Calu3 (cell line): ENCODE measurements at regions of chr17 and their contacts with region 1.

Region 1: GRCh38 chr17:81153340-81153803 is 11.9 kb upstream of the PVALEF start:
- DNase-seq: no peak
- H3K4me3 Mint-ChIP-seq: no peak overlapping the region
- H3K27ac Mint-ChIP-seq: no peak overlapping the region
- H3K4me1 Mint-ChIP-seq: no peaks in the 10 kb centered on the region
- H3K27me3 Mint-ChIP-seq: peaks cover 71% of the 10 kb centered on the region
- CTCF ChIP-seq: no peak

Region 2: GRCh38 chr17:81167638-81168037 is 14.3 kb after region 1 on chr17:
- CTCF ChIA-PET with region 1: no interaction called
- intact Hi-C with region 1: no loop called
- DNase-seq: no peak
- H3K4me3 Mint-ChIP-seq: no peak overlapping the region
- H3K27ac Mint-ChIP-seq: no peak overlapping the region
- H3K4me1 Mint-ChIP-seq: no peaks in the 10 kb centered on the region
- H3K27me3 Mint-ChIP-seq: peaks cover 33% of the 10 kb centered on the region
- CTCF ChIP-seq: no peak

Region 3: DNA sequence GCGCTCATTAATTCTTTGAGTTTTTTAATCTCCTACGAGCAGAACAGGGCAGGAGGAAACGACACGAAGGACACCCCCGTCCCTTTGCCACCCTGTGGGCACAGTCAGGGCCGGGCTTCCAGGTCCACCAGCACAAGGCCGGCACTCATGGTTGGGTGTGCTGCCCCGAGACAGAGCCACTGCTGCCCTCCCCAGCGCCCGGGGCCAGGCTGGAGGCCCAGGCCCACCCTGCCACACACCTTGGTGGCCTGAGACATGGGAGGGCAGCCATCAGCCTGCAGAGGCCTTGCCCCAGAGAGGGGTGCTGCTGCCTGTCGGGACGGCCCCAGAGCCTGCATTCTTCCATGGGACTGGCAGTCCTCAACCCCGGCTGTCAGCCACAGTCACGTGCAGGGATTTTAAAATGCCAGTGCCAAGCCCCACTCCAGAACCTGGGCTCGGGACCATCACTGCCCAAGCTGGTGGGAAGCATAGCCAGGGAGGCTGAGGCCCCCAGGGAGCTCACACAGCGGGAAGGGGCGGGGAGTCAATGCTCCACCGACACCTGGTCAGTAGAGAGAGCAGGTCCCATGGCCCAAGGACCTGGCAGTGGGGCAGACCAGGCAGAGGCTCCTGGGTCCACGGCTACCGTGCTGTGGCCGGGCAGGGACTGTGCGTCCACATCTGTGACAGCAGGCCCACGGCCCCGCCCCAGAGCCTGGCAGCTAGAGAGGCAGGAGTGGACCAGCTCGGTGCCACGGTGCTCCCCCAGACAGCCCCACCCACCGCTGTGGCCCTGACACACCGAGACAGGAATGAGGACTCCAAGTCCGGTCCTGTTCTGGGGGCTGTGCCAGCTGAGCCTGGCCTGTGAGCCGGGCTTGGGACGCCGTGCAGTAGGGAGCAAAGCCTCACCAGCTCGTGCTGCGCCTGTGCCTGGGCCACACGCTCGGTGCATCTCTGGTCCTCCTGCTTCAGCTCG is 41.8 kb after region 1 on chr17:
- CTCF ChIA-PET with region 1: interaction called, 10 read pairs
- intact Hi-C with region 1: no loop called
- DNase-seq: no peak
- H3K4me3 Mint-ChIP-seq: no peak overlapping the region
- H3K27ac Mint-ChIP-seq: no peak overlapping the region
- H3K4me1 Mint-ChIP-seq: no peaks in the 10 kb centered on the region
- H3K27me3 Mint-ChIP-seq: no peaks in the 10 kb centered on the region
- CTCF ChIP-seq: no peak